Activated T-helper 2 cell treated with anti-CD3 and anti-CD28 coated beads, Interferon-gamma antibody, Interleukin-2, Interleukin-4, amounts not matched to agents 10 μg/mL and 5 μg/mL and 100 μg/mL, durations not matched to agents 14 hours and 24 hours and 36 hours (primary cell): ENCODE measurements at regions of chr11 and their contacts with region 1.

Region 1: DNA sequence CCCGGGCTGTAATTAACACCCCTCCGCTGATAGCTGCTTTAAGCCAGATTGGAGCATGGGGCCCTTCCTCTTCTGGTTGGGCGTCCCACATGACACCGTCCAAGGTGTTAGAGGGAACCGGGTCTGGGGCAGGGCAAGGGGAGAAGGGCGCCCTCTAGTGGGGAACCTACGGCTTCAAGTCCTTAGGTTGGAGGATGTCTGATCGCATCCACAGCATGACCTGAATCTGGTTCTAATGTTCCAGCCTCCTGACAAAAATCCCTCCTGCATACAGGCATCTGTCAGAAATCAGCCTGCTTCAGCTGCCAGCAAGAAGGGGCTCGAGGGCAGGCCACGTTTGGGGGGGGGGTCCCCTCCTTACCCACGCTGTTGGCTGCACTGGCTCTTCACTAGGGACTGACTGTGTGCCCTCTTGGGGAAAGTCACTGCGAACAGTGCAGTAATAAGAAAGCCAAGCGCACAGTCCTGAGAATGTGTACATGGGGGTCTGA is 94.2 kb upstream of the TBCEL start:
- DNase-seq: no peak
- H3K4me3 Mint-ChIP-seq: no peak overlapping the region
- H3K27ac Mint-ChIP-seq: no peak overlapping the region
- H3K4me1 Mint-ChIP-seq: no peaks in the 10 kb centered on the region
- H3K27me3 Mint-ChIP-seq: peaks cover 2% of the 10 kb centered on the region

Region 2: DNA sequence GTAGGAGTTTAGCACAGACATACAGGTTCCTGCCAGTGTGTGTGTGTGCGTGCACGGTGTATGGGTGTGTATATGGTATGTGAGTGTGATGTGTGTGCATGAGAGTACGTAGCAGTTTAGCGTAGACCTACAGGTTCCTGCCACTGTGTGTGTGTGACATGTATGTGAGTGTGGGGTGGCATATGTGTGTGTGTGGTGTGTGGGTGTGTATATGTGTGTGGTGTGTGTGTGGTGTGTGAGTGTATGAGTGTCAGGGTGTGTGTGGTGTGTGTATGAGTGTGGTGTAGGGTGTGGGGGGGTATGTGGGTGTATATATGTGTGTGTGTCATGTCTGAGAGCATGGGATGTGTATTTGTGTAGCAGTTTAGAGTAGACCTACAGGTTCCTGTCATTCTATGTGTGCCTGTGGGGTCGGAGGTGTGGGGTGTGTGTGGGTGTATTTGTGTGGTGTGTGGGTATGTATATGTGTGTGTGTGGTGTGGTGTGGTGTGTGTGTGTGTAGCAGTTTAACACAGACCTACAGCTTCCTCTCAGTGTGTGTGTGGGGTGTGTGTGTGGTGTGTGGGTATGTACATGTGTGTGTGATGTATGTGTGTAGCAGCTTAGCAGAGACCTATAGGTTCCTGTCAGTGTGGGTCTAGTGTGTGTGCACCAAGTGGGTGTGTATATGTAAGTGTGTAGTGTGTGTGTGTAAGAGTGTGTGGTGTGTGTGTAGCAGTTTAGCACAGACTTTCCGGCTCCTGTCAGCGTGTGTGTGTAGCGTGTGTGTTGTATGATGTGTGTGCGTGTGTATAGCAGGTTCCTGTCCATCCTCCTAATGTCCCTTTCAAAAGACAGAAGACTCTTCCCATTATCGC is 62.3 kb after region 1 on chr11:
- intact Hi-C with region 1: no loop called
- DNase-seq: no peak
- H3K4me3 Mint-ChIP-seq: no peak overlapping the region
- H3K27ac Mint-ChIP-seq: no peak overlapping the region
- H3K4me1 Mint-ChIP-seq: peaks cover 3% of the 10 kb centered on the region
- H3K27me3 Mint-ChIP-seq: peaks cover 28% of the 10 kb centered on the region

Region 3: DNA sequence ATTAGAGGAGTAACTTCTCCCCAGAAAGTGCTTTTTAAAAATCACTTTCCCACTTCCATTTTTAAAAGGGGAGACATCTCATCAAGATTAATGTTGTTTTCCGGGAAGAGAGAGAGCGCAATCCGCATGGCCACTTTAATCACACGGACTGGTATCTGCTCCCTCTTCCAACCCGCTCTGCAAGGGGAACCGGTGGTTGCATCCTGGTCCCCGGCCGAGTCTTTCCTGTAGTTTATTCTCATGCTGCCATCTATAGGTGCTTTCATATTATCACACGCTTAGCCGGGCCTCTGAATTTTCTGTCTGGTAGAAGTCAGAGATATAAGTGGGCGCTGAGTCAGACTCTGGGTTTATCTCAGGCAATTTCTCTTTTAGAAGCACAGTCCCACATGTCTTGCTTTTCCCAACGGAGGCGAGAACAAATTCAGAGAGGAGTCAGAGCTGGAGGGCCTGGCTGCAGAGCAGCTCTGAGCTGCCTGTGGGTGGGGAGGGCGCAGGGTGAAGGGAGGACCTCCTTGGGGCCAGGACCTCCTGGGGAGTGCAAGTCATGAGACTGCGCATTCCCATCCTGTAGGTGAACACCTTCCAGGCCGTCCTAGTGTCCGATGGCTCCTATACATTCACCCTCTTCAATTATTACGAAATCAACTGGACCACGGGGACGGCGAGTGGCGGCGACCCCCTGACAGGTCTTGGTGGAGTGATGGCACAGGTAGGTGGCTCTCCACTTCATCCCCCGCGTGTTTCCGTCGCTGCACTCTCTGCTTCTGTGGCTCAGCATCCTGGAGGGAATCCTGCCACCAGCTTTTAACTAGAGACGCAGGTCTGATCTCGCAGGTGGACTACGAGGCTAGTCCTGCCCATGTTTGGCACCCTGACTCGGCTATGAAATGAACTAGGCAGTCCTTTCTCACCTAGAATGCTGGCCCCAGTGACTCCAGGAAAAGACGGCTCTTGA is 183.1 kb after region 1 on chr11:
- intact Hi-C with region 1: loop called (anchors 10 kb)
- DNase-seq: no peak
- H3K4me3 Mint-ChIP-seq: no peak overlapping the region
- H3K27ac Mint-ChIP-seq: no peak overlapping the region
- H3K4me1 Mint-ChIP-seq: no peaks in the 10 kb centered on the region
- H3K27me3 Mint-ChIP-seq: peaks cover 25% of the 10 kb centered on the region

Region 4: GRCh38 chr11:121194731-121195596 is 265.3 kb after region 1 on chr11:
- intact Hi-C with region 1: loop called (anchors 5 kb)
- DNase-seq: peak; percentile 40
- H3K4me3 Mint-ChIP-seq: no peak overlapping the region
- H3K27ac Mint-ChIP-seq: no peak overlapping the region
- H3K4me1 Mint-ChIP-seq: no peaks in the 10 kb centered on the region
- H3K27me3 Mint-ChIP-seq: peaks cover 20% of the 10 kb centered on the region